H1 (cell line): ENCODE measurements at regions of chr1 and their contacts with region 1.

Region 1: GRCh38 chr1:185864889-185865288 is 130.7 kb downstream of the HMCN1 start:
- DNase-seq: no peak
- H3K4me3 ChIP-seq: no peak overlapping the region
- H3K27ac ChIP-seq: peak overlapping the region; percentile 15; the same call in 1 of the 2 replicates
- H3K4me1 ChIP-seq: peaks cover 0 to 4% (median 1%) of the 10 kb centered on the region in 4 experiments; a peak in 1 of 7 replicates
- H3K27me3 ChIP-seq: no peaks in the 10 kb centered on the region
- CTCF ChIP-seq: no peak
- EP300 ChIP-seq: no peak
- POLR2A ChIP-seq: no peak
- RAD21 ChIP-seq: no peak

Region 2: DNA sequence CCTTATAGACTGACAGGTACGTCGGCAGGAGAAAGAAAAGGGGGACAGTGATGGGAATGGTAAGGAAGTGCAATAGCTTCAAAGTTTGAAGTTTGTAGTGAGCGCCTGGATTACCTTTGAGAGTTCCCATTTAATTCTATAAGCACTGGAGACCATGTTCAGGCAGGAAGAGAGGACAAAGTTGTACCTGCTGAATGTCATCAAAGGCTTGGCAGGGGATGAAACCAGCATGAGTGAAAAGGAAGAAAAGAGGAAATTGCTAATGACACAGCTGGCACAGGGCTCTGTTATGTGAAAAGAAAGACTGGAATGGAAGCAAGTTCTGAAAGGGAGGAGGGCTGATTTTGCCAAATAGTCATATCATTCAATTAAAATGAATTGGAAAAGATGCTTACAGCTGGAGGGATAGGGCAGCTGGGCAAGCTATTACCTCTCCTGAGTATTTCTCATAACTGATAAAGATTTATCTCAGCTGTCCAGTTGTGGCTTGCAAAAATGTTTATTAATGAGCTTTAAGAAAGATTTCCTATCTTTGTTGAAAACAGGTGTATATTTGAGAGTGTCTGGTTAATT is 21.5 kb before region 1 on chr1:
- CTCF ChIA-PET with region 1: interaction called, 10 read pairs
- POLR2A ChIA-PET with region 1: no interaction called
- DNase-seq: no peak
- H3K4me3 ChIP-seq: peak overlapping the region in 1 of 4 experiments; percentile 14; a peak in 1 of 8 replicates
- H3K27ac ChIP-seq: no peak overlapping the region
- H3K4me1 ChIP-seq: peaks cover 0 to 8% (median 3%) of the 10 kb centered on the region in 4 experiments; a peak in 4 of 7 replicates
- H3K27me3 ChIP-seq: no peaks in the 10 kb centered on the region
- CTCF ChIP-seq: no peak
- EP300 ChIP-seq: no peak
- POLR2A ChIP-seq: no peak
- RAD21 ChIP-seq: no peak